IMR-90 (cell line): ENCODE measurements at regions of chr2 and their contacts with region 1.

Region 1: GRCh38 chr2:203814661-203815540 is 52.7 kb upstream of the CTLA4 start:
- DNase-seq: peak; percentile 82
- ATAC-seq: peak; percentile 95
- H3K4me3 ChIP-seq: no peak overlapping the region
- H3K27ac ChIP-seq: no peak overlapping the region
- H3K4me1 ChIP-seq: peaks cover 6% of the 10 kb centered on the region
- H3K27me3 ChIP-seq: peaks cover 20% of the 10 kb centered on the region
- CTCF ChIP-seq: peak; percentile 90
- POLR2A ChIP-seq: peak; percentile 43; the same call in 1 of the 2 replicates
- RAD21 ChIP-seq: peak; percentile 96

Region 2: DNA sequence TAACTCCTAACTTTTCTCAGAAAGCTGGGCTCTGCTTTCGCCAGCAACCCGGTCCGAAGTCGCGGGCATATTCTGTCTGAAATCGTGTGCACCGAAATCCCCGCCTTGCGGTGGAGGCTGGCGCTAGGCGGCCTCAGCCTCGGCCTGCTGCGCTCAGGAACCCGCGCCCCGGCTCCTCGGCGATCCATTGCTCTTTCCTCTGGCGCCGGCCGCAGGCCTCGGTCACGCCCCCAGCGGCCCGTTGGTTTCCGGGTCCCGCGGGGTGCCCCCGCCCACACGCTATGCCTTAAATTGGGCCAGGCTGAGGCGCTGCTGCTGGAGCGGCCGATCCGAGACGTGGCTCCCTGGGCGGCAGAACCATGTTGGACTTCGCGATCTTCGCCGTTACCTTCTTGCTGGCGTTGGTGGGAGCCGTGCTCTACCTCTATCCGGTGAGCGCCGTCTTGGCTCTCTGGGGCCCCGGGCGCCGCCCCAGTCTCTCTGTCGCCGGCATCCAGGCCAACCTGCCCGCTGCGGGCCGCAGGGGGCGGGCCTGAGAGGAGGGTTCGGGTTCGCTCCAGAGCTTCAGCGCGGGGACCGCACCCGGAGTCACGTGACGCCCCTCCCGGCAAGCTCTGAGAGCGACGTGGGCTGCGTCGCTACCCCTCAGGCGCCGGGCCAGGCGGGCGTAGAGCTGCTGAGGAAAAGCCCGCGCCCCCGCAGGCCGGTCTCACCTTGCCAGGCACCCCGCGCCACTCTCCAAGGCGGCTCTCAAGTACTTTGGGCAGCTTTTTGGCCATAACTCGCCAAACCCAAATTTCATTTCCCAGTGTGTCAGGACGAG is 576.0 kb before region 1 on chr2 and contains the start of gene CYP20A1:
- CTCF ChIA-PET with region 1: interaction called, 3 read pairs
- POLR2A ChIA-PET with region 1: no interaction called
- dilution Hi-C with region 1: no loop called
- in situ Hi-C with region 1: loop called (anchors 25 kb)
- intact Hi-C with region 1: loop called (anchors 1 kb)
- DNase-seq: peak; percentile 94
- ATAC-seq: peak; percentile 97
- H3K4me3 ChIP-seq: peak within 1 kb of the TSS; percentile 64
- H3K27ac ChIP-seq: peak within 1 kb of the TSS; percentile 91
- H3K4me1 ChIP-seq: peaks cover 3% of the 10 kb centered on the region; the same call in 1 of the 2 replicates
- H3K27me3 ChIP-seq: no peaks in the 10 kb centered on the region
- CTCF ChIP-seq: peak; percentile 43
- POLR2A ChIP-seq: peak; percentile 96
- RAD21 ChIP-seq: peak; percentile 35
- total RNA-seq, gene CYP20A1: 16.8 and 26.9 TPM in 2 replicates

Region 3: DNA sequence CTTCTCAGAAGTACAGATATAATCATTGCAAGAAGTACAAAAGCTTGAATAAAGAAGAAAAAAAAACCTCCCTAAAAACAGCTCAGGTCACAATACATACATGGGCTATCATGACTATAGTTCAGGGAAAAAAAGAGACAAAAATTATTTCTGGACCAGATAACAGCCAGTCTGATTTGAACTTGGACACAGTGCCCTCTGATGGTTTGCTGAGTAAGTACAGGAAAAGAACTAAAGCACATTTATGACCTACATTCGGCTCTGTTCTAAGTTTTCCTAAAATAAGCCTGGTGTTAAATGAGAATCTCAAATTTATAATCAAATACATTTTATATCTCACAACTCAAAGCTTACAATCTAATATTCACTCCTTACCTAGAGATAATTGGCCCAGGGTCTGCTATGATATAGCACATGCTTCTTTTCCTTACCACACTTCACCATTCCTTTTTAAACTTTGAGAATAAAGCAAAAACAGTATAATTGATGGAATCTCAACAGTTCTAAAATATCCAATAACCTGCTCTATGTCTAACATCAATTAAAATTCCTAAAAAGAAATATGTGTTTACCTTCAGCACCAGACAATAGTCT is 360.9 kb before region 1 on chr2:
- CTCF ChIA-PET with region 1: interaction called, 4 read pairs
- POLR2A ChIA-PET with region 1: no interaction called
- dilution Hi-C with region 1: no loop called
- in situ Hi-C with region 1: no loop called
- intact Hi-C with region 1: loop called (anchors 5 kb)
- DNase-seq: peak; percentile 72
- ATAC-seq: peak; percentile 78
- H3K4me3 ChIP-seq: no peak overlapping the region
- H3K27ac ChIP-seq: no peak overlapping the region
- H3K4me1 ChIP-seq: peaks cover 11% of the 10 kb centered on the region
- H3K27me3 ChIP-seq: no peaks in the 10 kb centered on the region
- CTCF ChIP-seq: peak; percentile 76
- POLR2A ChIP-seq: no peak
- RAD21 ChIP-seq: peak; percentile 78

Region 4: DNA sequence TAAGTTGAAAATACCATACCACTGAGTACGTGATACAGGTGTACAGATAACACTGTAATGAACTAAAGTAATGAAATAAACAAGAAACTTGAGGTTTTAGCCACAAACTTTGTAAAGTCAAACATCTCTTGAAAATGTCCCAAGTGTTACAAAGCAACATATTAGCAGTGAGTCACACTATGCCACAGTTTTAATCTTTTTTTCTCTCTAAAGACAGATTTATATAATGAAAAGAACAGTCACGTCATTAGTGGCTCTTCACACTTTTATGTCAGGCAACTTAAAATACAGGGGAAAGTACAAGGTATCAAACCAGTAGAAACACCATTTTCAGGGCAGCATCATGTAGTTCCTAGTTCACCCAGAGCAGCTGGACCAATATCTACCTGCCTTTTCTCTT is 321.9 kb before region 1 on chr2:
- CTCF ChIA-PET with region 1: no interaction called
- POLR2A ChIA-PET with region 1: no interaction called
- dilution Hi-C with region 1: no loop called
- in situ Hi-C with region 1: loop called (anchors 5 kb)
- intact Hi-C with region 1: no loop called
- DNase-seq: peak; percentile 32
- ATAC-seq: peak; percentile 37
- H3K4me3 ChIP-seq: no peak overlapping the region
- H3K27ac ChIP-seq: no peak overlapping the region
- H3K4me1 ChIP-seq: peaks cover 2% of the 10 kb centered on the region
- H3K27me3 ChIP-seq: no peaks in the 10 kb centered on the region
- CTCF ChIP-seq: no peak
- POLR2A ChIP-seq: no peak
- RAD21 ChIP-seq: no peak

Region 5: GRCh38 chr2:203535078-203535783 is 279.7 kb before region 1 on chr2 and contains the start of gene RAPH1:
- CTCF ChIA-PET with region 1: interaction called, 3 read pairs
- POLR2A ChIA-PET with region 1: no interaction called
- dilution Hi-C with region 1: no loop called
- in situ Hi-C with region 1: no loop called
- intact Hi-C with region 1: loop called (anchors 1 kb)
- DNase-seq: peak; percentile 82
- ATAC-seq: peak; percentile 92
- H3K4me3 ChIP-seq: peak within 1 kb of the TSS; percentile 58
- H3K27ac ChIP-seq: peak within 1 kb of the TSS; percentile 90
- H3K4me1 ChIP-seq: no peaks in the 10 kb centered on the region; the same call in 1 of the 2 replicates
- H3K27me3 ChIP-seq: no peaks in the 10 kb centered on the region
- CTCF ChIP-seq: no peak
- POLR2A ChIP-seq: peak; percentile 83
- RAD21 ChIP-seq: no peak; the same call in 1 of the 2 replicates
- total RNA-seq, gene RAPH1: 13.1 and 15.1 TPM in 2 replicates

Region 6: DNA sequence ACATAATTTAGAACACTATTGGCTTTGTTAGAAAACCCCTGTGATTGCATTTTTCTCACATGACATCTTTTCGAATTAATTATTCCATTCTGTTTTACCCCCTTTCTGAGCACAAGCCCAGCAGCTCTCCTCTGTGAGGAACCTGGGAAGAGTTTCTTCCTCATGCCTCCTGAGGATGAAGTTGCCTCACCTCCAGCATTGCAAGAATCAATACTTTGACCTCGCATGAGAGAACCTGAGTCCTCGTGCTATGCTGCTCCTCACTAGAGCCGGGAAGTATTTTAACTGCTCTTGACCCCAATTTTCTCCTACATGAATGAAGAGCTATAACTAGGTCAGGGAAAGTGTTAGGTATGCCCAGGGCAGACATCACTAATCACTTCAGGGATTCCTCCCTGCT is 202.6 kb before region 1 on chr2:
- CTCF ChIA-PET with region 1: no interaction called
- POLR2A ChIA-PET with region 1: no interaction called
- dilution Hi-C with region 1: no loop called
- in situ Hi-C with region 1: no loop called
- intact Hi-C with region 1: no loop called
- DNase-seq: no peak
- ATAC-seq: no peak
- H3K4me3 ChIP-seq: no peak overlapping the region
- H3K27ac ChIP-seq: no peak overlapping the region
- H3K4me1 ChIP-seq: no peaks in the 10 kb centered on the region
- H3K27me3 ChIP-seq: no peaks in the 10 kb centered on the region
- CTCF ChIP-seq: no peak
- POLR2A ChIP-seq: no peak
- RAD21 ChIP-seq: no peak

Region 7: DNA sequence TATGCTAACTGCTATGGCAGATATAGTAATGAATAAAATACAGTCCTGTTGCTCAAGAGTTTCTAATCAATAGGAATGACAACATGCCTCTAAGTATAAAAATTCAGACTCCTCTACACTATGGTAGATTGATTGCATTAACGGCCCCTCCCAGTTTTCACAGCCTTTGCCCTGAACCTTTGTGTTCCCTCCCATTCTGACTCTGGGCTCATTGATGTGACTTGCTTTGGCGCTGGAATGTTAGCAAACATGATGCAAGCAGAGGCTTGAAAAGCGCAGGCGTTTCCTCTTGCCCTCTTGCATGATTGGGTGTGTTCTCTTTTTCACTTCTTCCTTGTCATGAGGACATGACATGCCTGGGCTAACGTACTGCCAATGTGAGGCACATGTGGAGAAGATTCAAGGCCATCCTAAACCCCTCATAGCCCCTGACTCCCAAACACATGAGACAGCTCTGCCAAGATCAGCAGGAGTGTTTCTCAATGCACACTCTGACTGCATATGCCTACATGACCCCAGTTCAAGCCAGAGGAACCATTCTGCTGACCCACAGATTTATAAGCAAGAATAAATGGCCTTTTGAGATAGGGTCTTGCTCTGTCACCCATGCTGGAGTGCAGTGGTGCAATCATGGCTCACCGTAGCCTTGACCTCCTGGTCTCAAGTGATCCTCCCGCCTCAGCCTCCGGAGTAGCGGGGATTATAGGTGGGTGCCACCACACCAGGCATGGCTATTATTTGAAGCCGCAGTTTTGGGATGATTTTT is 158.2 kb before region 1 on chr2:
- CTCF ChIA-PET with region 1: interaction called, 3 read pairs
- POLR2A ChIA-PET with region 1: no interaction called
- dilution Hi-C with region 1: no loop called
- in situ Hi-C with region 1: no loop called
- intact Hi-C with region 1: loop called (anchors 1 kb)
- DNase-seq: peak; percentile 35
- ATAC-seq: peak; percentile 62
- H3K4me3 ChIP-seq: no peak overlapping the region
- H3K27ac ChIP-seq: no peak overlapping the region
- H3K4me1 ChIP-seq: no peaks in the 10 kb centered on the region
- H3K27me3 ChIP-seq: no peaks in the 10 kb centered on the region
- CTCF ChIP-seq: no peak
- POLR2A ChIP-seq: no peak
- RAD21 ChIP-seq: no peak

Region 8: GRCh38 chr2:204386668-204387067 is 571.8 kb after region 1 on chr2:
- CTCF ChIA-PET with region 1: no interaction called
- POLR2A ChIA-PET with region 1: no interaction called
- dilution Hi-C with region 1: no loop called
- in situ Hi-C with region 1: no loop called
- intact Hi-C with region 1: no loop called
- DNase-seq: no peak
- ATAC-seq: no peak
- H3K4me3 ChIP-seq: no peak overlapping the region
- H3K27ac ChIP-seq: no peak overlapping the region
- H3K4me1 ChIP-seq: no peaks in the 10 kb centered on the region
- H3K27me3 ChIP-seq: no peaks in the 10 kb centered on the region
- CTCF ChIP-seq: no peak
- POLR2A ChIP-seq: no peak
- RAD21 ChIP-seq: no peak